Natural killer cell (primary cell): ENCODE measurements at regions of chr4 and their contacts with region 1.

Region 1: GRCh38 chr4:167897116-167897515 is 195.2 kb upstream of the ANXA10 start:
- DNase-seq: no peak
- ATAC-seq: no peak
- H3K4me3 ChIP-seq: no peak overlapping the region
- H3K4me3 Mint-ChIP-seq: no peak overlapping the region
- H3K27ac ChIP-seq: no peak overlapping the region
- H3K27ac Mint-ChIP-seq: no peak overlapping the region
- H3K4me1 ChIP-seq: no peaks in the 10 kb centered on the region
- H3K4me1 Mint-ChIP-seq: no peaks in the 10 kb centered on the region
- H3K27me3 ChIP-seq: no peaks in the 10 kb centered on the region
- H3K27me3 Mint-ChIP-seq: no peaks in the 10 kb centered on the region
- CTCF ChIP-seq: no peak

Region 2: DNA sequence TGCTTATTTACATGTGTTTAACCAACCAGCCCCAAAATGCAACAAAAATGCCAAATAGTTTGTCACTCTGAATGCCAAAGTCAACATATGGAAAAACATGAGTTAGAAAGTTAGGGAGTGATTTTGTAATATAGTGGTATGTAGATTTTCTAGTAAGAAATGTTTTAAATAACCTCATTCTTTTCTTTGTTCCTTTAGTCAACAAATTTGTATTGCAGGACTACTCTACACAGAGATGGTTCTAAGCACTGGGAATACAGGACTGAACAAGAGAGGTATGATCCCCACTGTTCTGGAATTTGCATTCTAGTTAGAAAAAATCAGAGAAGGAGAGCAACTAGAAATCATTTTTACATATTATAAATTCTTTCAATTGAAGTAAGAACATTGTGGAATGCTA is 23.6 kb before region 1 on chr4:
- intact Hi-C with region 1: loop called (anchors 1 kb)
- DNase-seq: no peak
- ATAC-seq: no peak
- H3K4me3 ChIP-seq: no peak overlapping the region
- H3K4me3 Mint-ChIP-seq: no peak overlapping the region
- H3K27ac ChIP-seq: no peak overlapping the region
- H3K27ac Mint-ChIP-seq: no peak overlapping the region
- H3K4me1 ChIP-seq: no peaks in the 10 kb centered on the region
- H3K4me1 Mint-ChIP-seq: no peaks in the 10 kb centered on the region
- H3K27me3 ChIP-seq: no peaks in the 10 kb centered on the region
- H3K27me3 Mint-ChIP-seq: no peaks in the 10 kb centered on the region
- CTCF ChIP-seq: no peak

Region 3: DNA sequence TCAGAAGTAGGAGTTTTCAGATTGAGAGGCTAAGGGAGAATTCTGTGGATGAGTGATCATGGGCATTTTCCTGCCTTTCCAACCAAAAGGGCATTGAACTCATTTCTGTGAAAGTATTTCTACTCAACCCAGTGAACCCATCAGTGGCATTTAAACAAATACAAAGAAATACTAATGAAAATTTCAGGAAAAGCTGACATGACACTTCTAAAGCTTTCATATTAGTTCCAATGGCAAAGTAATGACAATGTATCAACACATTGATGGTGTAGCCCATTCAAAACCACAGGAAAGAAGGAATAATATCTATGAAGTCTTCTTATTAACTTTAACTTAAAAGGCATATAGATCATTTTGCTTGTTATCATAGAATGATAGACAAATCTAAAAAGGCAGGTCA is 11.7 kb after region 1 on chr4:
- intact Hi-C with region 1: no loop called
- DNase-seq: no peak
- ATAC-seq: no peak
- H3K4me3 ChIP-seq: no peak overlapping the region
- H3K4me3 Mint-ChIP-seq: no peak overlapping the region
- H3K27ac ChIP-seq: no peak overlapping the region
- H3K27ac Mint-ChIP-seq: no peak overlapping the region
- H3K4me1 ChIP-seq: no peaks in the 10 kb centered on the region
- H3K4me1 Mint-ChIP-seq: no peaks in the 10 kb centered on the region
- H3K27me3 ChIP-seq: no peaks in the 10 kb centered on the region
- H3K27me3 Mint-ChIP-seq: no peaks in the 10 kb centered on the region
- CTCF ChIP-seq: no peak

Region 4: GRCh38 chr4:167943872-167944505 is 46.9 kb after region 1 on chr4:
- intact Hi-C with region 1: no loop called
- DNase-seq: no peak
- ATAC-seq: no peak
- H3K4me3 ChIP-seq: no peak overlapping the region
- H3K4me3 Mint-ChIP-seq: no peak overlapping the region
- H3K27ac ChIP-seq: no peak overlapping the region
- H3K27ac Mint-ChIP-seq: no peak overlapping the region
- H3K4me1 ChIP-seq: no peaks in the 10 kb centered on the region
- H3K4me1 Mint-ChIP-seq: no peaks in the 10 kb centered on the region
- H3K27me3 ChIP-seq: no peaks in the 10 kb centered on the region
- H3K27me3 Mint-ChIP-seq: no peaks in the 10 kb centered on the region
- CTCF ChIP-seq: no peak